Right ventricle myocardium inferior (tissue), 1 donor: ENCODE measurements at regions of chr17 and their contacts with region 1.

Region 1: DNA sequence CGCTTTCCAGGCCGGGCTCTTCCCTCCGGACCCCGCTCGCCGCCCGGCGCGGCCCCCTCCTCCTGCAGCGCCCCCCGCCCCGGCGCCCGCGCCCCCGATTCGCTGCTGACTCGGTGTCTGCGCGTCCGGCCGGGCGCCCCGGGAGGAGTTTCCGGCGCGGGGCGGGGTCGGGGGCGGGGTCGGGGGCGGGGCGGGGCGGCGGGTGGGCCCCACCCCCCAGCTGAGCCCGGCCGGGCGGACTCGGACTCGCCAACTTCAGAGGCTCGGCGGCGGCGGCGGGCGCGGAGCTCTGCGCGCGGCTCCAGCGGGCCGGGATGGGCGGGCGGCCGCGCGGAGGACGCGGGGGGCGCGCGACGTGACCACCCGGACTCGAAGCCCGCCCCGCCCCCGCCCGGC is at the start of gene METRNL:
- DNase-seq: peak; percentile 93
- ATAC-seq: peak; percentile 65
- total RNA-seq, gene METRNL: 70.1 TPM

Region 2: GRCh38 chr17:82962864-82963684 is 116.3 kb before region 1 on chr17:
- intact Hi-C with region 1: loop called (anchors 5 kb)
- DNase-seq: peak; percentile 91
- ATAC-seq: peak; percentile 91

Region 3: DNA sequence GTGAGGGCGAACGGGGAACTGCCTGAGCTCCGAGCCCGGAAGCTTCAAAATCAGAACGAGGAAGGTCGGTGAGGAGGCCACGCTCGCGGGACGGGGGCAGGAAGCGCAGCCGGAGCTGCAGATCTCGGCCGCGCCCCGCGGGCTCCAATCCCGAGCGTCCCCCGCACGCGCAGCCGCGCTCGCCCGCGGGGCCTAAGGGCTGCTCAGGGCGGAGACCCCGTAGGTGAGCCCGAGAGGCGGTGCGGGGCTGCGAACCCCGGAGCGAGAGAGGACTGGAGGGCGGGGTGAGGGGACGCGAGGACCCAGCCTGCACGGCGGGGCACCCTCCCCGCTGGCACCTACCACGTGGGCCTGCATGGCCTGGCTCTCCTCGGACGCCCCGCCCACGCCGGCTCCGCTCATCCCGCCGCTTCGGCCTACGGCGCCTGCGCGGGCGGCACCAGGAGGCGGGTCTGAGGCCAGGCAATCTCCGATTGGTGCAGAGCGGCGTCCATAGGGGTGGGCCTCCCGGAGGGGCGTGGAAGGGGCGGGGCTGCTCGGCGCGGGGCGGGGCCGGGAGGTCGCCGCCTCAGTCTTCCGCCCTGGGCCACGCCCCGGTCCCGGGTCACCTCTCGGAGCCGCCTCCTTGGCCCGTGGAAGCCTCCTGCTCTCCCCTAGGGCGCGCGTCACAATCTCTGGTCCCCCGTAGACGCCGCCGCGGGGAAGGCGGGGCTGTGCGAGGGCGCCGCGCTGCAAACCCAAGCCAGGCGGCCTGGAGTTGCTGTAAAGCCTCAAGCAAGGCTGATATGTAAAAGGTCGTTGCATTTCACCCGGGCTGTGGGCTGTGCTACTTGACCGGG is 27.7 kb before region 1 on chr17:
- intact Hi-C with region 1: loop called (anchors 2 kb)
- DNase-seq: peak; percentile 98
- ATAC-seq: peak; percentile 98